Activated CD8-positive, alpha-beta T cell treated with anti-CD3 and anti-CD28 coated beads for 36 hours (primary cell): ENCODE measurements at regions of chr6 and their contacts with region 1.

Region 1: GRCh38 chr6:3125815-3126214 is 7.3 kb downstream of the BPHL start:
- DNase-seq: no peak
- ATAC-seq: no peak
- H3K4me3 Mint-ChIP-seq: no peak overlapping the region
- H3K27ac Mint-ChIP-seq: no peak overlapping the region
- H3K4me1 Mint-ChIP-seq: peaks cover 5% of the 10 kb centered on the region
- H3K27me3 Mint-ChIP-seq: no peaks in the 10 kb centered on the region
- CTCF ChIP-seq: no peak

Region 2: GRCh38 chr6:3209114-3210023 is 83.6 kb after region 1 on chr6:
- CTCF ChIA-PET with region 1: no interaction called
- POLR2A ChIA-PET with region 1: no interaction called
- intact Hi-C with region 1: loop called (anchors 10 kb)
- DNase-seq: peak; percentile 73
- ATAC-seq: peak; percentile 83
- H3K4me3 Mint-ChIP-seq: no peak overlapping the region
- H3K27ac Mint-ChIP-seq: peak overlapping the region; percentile 87
- H3K4me1 Mint-ChIP-seq: peaks cover 27% of the 10 kb centered on the region
- H3K27me3 Mint-ChIP-seq: peaks cover 18% of the 10 kb centered on the region
- CTCF ChIP-seq: no peak